ENCODE measurements at regions of chr2 and their contacts with region 1.

Region 1: DNA sequence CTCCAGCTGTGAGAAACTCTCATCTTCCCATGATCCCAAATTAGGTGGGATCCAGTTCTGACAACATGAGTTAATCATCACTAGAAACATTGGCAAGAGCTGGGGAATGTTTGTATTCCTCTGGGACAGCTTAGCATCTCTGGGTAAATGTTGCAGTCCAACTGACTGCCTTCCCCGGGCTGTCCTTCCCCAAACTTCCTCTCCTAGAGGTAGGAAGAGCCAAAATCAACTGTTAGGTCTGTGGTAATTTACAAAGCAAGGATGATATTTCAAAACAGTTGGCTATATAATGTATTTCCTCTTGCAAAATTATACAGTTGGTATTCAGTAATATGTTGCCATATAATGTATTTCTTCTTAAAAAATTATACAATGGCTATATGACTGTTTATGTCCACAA is 148.5 kb downstream of the MGAT5 start:
- DNase-seq: peak; percentile 84
- H3K4me3 Mint-ChIP-seq: no peak overlapping the region
- H3K27ac Mint-ChIP-seq: peak overlapping the region; percentile 8
- H3K4me1 Mint-ChIP-seq: peaks cover 79% of the 10 kb centered on the region
- H3K27me3 Mint-ChIP-seq: no peaks in the 10 kb centered on the region
- CTCF ChIP-seq: no peak

Region 2: GRCh38 chr2:133878326-133878725 is 524.1 kb before region 1 on chr2:
- CTCF ChIA-PET with region 1: no interaction called
- POLR2A ChIA-PET with region 1: no interaction called
- intact Hi-C with region 1: no loop called
- DNase-seq: no peak
- H3K4me3 Mint-ChIP-seq: no peak overlapping the region
- H3K27ac Mint-ChIP-seq: no peak overlapping the region
- H3K4me1 Mint-ChIP-seq: no peaks in the 10 kb centered on the region
- H3K27me3 Mint-ChIP-seq: peaks cover 59% of the 10 kb centered on the region
- CTCF ChIP-seq: no peak

Region 3: GRCh38 chr2:134386310-134386709 is 16.1 kb before region 1 on chr2:
- CTCF ChIA-PET with region 1: interaction called, 15 read pairs
- POLR2A ChIA-PET with region 1: interaction called, 10 read pairs
- intact Hi-C with region 1: no loop called
- DNase-seq: no peak
- H3K4me3 Mint-ChIP-seq: no peak overlapping the region
- H3K27ac Mint-ChIP-seq: no peak overlapping the region
- H3K4me1 Mint-ChIP-seq: peaks cover 7% of the 10 kb centered on the region
- H3K27me3 Mint-ChIP-seq: no peaks in the 10 kb centered on the region
- CTCF ChIP-seq: no peak

Region 4: GRCh38 chr2:134391751-134392160 is 10.7 kb before region 1 on chr2:
- CTCF ChIA-PET with region 1: interaction called, 15 read pairs
- POLR2A ChIA-PET with region 1: interaction called, 19 read pairs
- intact Hi-C with region 1: no loop called
- DNase-seq: peak; percentile 83
- H3K4me3 Mint-ChIP-seq: peak overlapping the region; percentile 44
- H3K27ac Mint-ChIP-seq: peak overlapping the region; percentile 50
- H3K4me1 Mint-ChIP-seq: peaks cover 23% of the 10 kb centered on the region
- H3K27me3 Mint-ChIP-seq: no peaks in the 10 kb centered on the region
- CTCF ChIP-seq: no peak

Measured in MCF 10A (cell line).